Pancreas (tissue), 10 donors: ENCODE measurements at regions of chr21 and their contacts with region 1.

Region 1: GRCh38 chr21:35664683-35665082 is 395.6 kb downstream of the SETD4 start:
- DNase-seq: no peak
- ATAC-seq: peak in 3 of 4 donors; percentile 50 to 81 (median 53)
- H3K4me3 ChIP-seq: no peak overlapping the region
- H3K27ac ChIP-seq: no peak overlapping the region
- H3K4me1 ChIP-seq: no peaks in the 10 kb centered on the region
- H3K27me3 ChIP-seq: no peaks in the 10 kb centered on the region
- CTCF ChIP-seq: no peak

Region 2: DNA sequence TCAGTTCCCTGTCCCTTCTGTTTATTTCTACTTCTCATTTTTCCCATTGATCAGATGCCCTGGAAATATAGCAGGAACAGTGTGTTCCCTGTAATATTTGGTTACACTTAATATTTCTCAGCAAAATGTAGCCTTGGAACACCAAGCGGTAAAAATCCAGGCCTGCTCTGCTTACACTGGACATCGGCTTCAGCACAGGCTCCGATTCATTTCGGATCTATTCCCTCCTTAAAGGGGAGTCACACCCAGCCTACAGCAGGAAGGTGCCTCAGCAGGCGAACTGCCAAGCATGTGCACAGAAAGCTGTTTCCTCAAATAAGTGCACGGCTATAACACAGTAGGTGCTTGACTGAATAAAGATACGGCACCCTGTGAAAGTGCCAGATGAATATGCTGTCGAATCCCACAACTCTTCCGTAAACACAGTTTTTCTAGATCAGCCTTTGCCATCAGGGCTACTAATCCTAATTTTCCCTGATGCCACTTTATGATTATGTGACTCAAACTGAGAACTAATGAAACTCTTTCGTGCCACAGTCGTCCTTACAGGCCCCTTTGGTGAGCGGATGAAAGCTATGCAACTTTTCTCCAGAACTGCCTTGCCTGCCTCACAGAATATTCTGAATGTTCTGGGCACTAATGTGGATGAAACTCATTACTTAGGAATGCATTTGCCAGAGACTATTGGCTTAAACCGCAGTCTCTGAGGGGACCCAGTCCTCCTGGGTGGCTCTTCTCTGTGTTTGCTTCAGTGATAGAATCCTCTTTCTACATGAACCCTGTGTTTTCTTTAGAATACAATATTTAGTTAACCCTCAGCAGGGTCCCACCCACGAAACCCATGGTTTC is 340.1 kb before region 1 on chr21:
- intact Hi-C with region 1: no loop called
- DNase-seq: no peak
- ATAC-seq: peak in 3 of 4 donors; percentile 14 to 47 (median 36)
- H3K4me3 ChIP-seq: no peak overlapping the region
- H3K27ac ChIP-seq: no peak overlapping the region
- H3K4me1 ChIP-seq: peaks cover 0 to under 1% (median 0%) of the 10 kb centered on the region in 3 donors
- H3K27me3 ChIP-seq: no peaks in the 10 kb centered on the region
- CTCF ChIP-seq: no peak

Region 3: DNA sequence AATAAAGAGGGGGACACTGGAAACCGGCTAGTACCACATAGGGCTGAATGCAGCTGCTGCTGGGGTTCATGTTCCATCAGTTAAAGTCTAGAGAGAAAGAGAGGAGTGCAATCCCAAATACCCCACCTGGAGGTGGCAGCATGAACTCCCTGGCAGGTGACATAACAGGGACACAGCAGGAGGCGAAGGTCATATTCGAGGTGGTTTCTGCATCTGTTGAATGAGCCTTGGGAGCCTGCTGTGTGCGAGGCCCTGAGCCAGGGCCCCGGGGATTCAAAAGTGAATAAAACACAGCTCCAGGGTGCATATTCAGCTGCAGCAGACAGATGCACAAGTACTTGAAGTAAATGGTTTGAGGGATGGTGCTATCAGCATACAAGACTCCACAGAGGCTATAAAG is 61.2 kb before region 1 on chr21:
- intact Hi-C with region 1: no loop called
- DNase-seq: peak in 1 of 6 donors; percentile 13
- ATAC-seq: peak in 1 of 4 donors; percentile 68
- H3K4me3 ChIP-seq: no peak overlapping the region
- H3K27ac ChIP-seq: no peak overlapping the region
- H3K4me1 ChIP-seq: no peaks in the 10 kb centered on the region
- H3K27me3 ChIP-seq: no peaks in the 10 kb centered on the region
- CTCF ChIP-seq: no peak

Region 4: GRCh38 chr21:35768187-35768586 is 103.5 kb after region 1 on chr21:
- intact Hi-C with region 1: no loop called
- DNase-seq: no peak
- ATAC-seq: no peak
- H3K4me3 ChIP-seq: no peak overlapping the region
- H3K27ac ChIP-seq: no peak overlapping the region
- H3K4me1 ChIP-seq: no peaks in the 10 kb centered on the region
- H3K27me3 ChIP-seq: no peaks in the 10 kb centered on the region
- CTCF ChIP-seq: no peak

Region 5: GRCh38 chr21:35840197-35840799 is 175.6 kb after region 1 on chr21:
- intact Hi-C with region 1: loop called in 1 of 3 experiments (anchors 10 kb)
- DNase-seq: peak in 3 of 6 donors; percentile 47 to 68 (median 65)
- ATAC-seq: peak; percentile 55 to 95 (median 92)
- H3K4me3 ChIP-seq: no peak overlapping the region
- H3K27ac ChIP-seq: no peak overlapping the region
- H3K4me1 ChIP-seq: no peaks in the 10 kb centered on the region
- H3K27me3 ChIP-seq: no peaks in the 10 kb centered on the region
- CTCF ChIP-seq: peak; percentile 43 to 84 (median 71)

Region 6: GRCh38 chr21:35861661-35862060 is 197.0 kb after region 1 on chr21:
- intact Hi-C with region 1: no loop called
- DNase-seq: no peak
- ATAC-seq: no peak
- H3K4me3 ChIP-seq: no peak overlapping the region
- H3K27ac ChIP-seq: no peak overlapping the region
- H3K4me1 ChIP-seq: no peaks in the 10 kb centered on the region
- H3K27me3 ChIP-seq: no peaks in the 10 kb centered on the region
- CTCF ChIP-seq: no peak